Activated B cell treated with CpG ODN at 0.5 μM for 24 hours (primary cell): ENCODE measurements at regions of chr22 and their contacts with region 1.

Region 1: DNA sequence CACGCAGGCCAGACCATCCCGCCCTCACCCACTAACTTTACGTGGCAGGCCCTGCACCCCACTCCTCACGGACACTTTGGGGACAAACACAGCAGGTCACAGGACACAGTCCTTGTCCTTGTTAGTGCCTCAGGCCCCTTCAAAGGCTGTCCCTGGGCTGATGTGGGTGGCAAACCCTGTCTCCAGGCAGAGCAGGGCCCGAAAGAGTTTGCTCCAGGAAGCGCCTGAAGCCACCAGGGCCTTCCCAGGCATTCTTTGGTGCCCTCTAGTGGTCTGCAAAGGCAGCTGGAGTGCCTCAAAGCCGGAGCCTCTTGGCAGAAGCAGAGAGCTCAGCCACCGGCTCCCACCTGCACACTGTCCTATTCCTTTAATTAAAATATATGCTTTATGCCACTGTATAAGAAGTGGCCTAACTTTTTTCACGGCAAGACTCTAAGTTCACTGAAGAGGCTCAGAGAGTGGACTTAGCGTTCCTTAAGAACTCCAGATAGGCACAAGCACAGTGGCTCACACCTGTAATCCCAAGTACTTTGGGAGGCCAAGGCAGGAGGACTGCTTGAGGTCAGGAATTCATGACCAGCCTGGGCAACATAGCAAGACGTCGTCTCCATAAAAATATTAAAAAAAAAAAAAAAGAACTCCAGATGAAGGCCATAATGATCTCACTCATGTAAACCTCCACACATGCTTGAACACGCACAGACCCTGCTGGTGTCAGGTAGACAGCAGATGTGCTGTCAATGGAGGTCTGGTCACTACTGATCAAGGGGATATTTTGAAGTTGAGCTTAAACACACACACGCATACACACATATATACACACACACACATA is 11.1 kb downstream of the TXN2 start:
- DNase-seq: peak; percentile 62
- ATAC-seq: peak; percentile 96
- H3K4me3 Mint-ChIP-seq: no peak overlapping the region
- H3K27ac Mint-ChIP-seq: no peak overlapping the region
- H3K4me1 Mint-ChIP-seq: peaks cover 6% of the 10 kb centered on the region
- H3K27me3 Mint-ChIP-seq: no peaks in the 10 kb centered on the region
- CTCF ChIP-seq: no peak

Region 2: DNA sequence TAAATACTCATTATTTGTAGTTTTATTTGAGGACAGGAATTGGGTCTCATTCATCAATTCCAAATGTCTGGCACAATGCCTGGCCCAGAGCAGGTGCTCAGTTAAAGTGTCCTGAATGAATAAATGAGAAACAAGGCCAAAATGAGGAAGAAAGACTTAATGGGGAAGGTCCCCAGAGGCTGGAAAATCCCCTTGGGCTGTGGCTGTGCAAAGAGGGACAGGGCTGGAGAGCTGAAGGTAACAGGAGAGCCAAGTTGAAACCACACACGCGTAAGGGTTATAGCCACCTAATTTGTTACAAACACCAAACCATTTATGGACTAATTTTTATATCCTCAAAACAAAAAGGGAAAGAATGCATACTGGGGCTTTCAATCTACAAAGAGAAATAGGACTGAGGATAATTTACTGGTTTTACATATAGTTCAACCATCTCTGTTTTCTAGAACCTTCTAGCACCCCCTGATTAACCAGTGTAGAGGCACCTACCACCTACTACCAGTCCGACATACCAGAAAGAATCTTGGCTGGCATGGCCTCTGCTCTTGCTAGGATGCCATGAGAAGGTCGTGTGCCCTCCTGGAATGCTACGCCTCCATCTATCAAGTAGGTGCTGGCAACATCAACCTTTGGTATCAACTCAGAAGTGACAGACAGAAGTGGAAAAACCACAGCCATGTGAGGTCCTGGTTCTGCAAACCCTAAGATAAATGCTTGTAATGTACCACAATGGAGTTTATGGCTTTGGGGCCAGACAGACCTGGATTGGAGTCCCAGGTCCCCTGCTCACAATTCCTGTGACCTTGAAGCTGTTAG is 111.0 kb before region 1 on chr22:
- CTCF ChIA-PET with region 1: interaction called, 15 read pairs
- POLR2A ChIA-PET with region 1: no interaction called
- intact Hi-C with region 1: no loop called
- DNase-seq: peak; percentile 59
- ATAC-seq: peak; percentile 85
- H3K4me3 Mint-ChIP-seq: peak overlapping the region; percentile 72
- H3K27ac Mint-ChIP-seq: peak overlapping the region; percentile 95
- H3K4me1 Mint-ChIP-seq: peaks cover 99% of the 10 kb centered on the region
- H3K27me3 Mint-ChIP-seq: no peaks in the 10 kb centered on the region
- CTCF ChIP-seq: no peak

Region 3: GRCh38 chr22:36409911-36410756 is 60.2 kb before region 1 on chr22:
- CTCF ChIA-PET with region 1: interaction called, 14 read pairs
- POLR2A ChIA-PET with region 1: no interaction called
- intact Hi-C with region 1: loop called (anchors 1 kb)
- DNase-seq: peak; percentile 60
- ATAC-seq: peak; percentile 70
- H3K4me3 Mint-ChIP-seq: peak overlapping the region; percentile 83
- H3K27ac Mint-ChIP-seq: peak overlapping the region; percentile 89
- H3K4me1 Mint-ChIP-seq: peaks cover 65% of the 10 kb centered on the region
- H3K27me3 Mint-ChIP-seq: no peaks in the 10 kb centered on the region
- CTCF ChIP-seq: no peak

Region 4: GRCh38 chr22:36493690-36494110 is 23.3 kb after region 1 on chr22:
- CTCF ChIA-PET with region 1: no interaction called
- POLR2A ChIA-PET with region 1: no interaction called
- intact Hi-C with region 1: no loop called
- DNase-seq: peak; percentile 41
- ATAC-seq: peak; percentile 86
- H3K4me3 Mint-ChIP-seq: peak overlapping the region; percentile 67
- H3K27ac Mint-ChIP-seq: peak overlapping the region; percentile 79
- H3K4me1 Mint-ChIP-seq: peaks cover 26% of the 10 kb centered on the region
- H3K27me3 Mint-ChIP-seq: no peaks in the 10 kb centered on the region
- CTCF ChIP-seq: no peak